BJ (cell line): ENCODE measurements at regions of chr1 and their contacts with region 1.

Region 1: GRCh38 chr1:108828022-108828961 is 28.6 kb downstream of the AKNAD1 start:
- DNase-seq: peak; percentile 83
- H3K4me3 ChIP-seq: peak overlapping the region; percentile 12; the same call in 1 of the 2 replicates
- H3K27me3 ChIP-seq: no peaks in the 10 kb centered on the region
- CTCF ChIP-seq: peak; percentile 68

Region 2: DNA sequence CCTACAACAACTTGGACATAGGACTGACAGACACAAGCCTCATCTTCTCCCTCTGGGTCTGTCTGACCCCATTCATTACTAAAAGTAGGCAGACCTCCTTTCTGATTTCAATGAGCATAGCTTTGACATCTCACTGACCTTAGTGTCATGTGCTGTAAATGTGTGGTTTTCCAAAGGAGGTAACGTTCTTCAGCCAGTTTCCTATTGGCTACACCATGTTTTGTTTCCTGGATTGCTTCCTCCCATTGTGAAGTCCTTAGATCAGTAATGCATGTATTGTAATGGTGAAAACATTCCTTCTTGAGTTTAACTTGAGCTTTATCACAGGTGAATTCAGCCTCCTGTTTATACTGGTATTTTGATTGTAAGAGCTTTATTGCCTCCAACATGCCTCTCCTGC is 61.2 kb before region 1 on chr1:
- CTCF ChIA-PET with region 1: no interaction called
- POLR2A ChIA-PET with region 1: no interaction called
- DNase-seq: no peak
- H3K4me3 ChIP-seq: no peak overlapping the region
- H3K27me3 ChIP-seq: no peaks in the 10 kb centered on the region
- CTCF ChIP-seq: no peak

Region 3: DNA sequence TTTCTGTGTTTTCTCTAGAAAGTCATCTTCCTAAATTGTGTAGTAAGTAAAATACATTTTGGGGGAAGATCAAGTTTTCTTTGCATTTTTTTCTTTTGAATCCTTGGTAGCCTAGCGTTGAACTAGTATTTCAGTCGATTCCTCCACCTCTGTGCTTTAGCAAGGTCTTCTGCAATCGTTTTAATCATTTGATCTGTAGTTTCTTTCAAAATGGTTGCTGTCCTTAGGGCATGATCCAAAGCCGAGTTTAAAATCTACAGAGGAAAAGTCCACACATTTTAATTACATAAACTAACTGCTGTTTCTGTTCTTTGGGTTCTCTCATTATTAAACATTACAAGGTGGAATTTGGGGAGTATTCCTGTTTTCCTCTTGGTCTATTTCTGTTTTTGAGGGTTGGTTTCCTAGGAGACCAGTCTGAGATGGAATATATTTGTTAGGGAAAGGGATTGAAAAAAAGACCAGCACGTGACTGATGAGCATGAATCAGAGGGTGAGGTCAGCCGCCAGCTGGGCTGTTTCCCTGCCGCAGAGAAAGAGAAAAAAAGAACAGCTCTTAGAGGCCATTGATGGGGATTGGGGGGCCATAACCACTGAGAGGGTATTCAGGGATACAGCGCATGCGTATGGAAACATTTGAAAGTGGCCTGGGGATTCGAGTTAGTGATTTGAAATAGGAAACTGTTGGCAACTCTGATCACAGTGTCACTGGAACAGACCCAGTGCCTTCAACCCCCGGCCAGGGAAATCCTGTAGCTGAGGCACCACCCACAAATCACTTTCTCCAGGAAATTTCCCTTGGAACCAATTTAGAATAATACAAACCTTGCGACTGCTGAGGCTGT is 12.0 kb before region 1 on chr1:
- CTCF ChIA-PET with region 1: interaction called, 29 read pairs
- POLR2A ChIA-PET with region 1: interaction called, 6 read pairs
- DNase-seq: peak; percentile 88
- H3K4me3 ChIP-seq: peak overlapping the region; percentile 13; the same call in 1 of the 2 replicates
- H3K27me3 ChIP-seq: no peaks in the 10 kb centered on the region
- CTCF ChIP-seq: no peak

Region 4: GRCh38 chr1:108852221-108852975 is 24.1 kb after region 1 on chr1:
- CTCF ChIA-PET with region 1: interaction called, 17 read pairs
- POLR2A ChIA-PET with region 1: no interaction called
- DNase-seq: no peak
- H3K4me3 ChIP-seq: no peak overlapping the region
- H3K27me3 ChIP-seq: no peaks in the 10 kb centered on the region; the same call in 1 of the 2 replicates
- CTCF ChIP-seq: no peak

Region 5: DNA sequence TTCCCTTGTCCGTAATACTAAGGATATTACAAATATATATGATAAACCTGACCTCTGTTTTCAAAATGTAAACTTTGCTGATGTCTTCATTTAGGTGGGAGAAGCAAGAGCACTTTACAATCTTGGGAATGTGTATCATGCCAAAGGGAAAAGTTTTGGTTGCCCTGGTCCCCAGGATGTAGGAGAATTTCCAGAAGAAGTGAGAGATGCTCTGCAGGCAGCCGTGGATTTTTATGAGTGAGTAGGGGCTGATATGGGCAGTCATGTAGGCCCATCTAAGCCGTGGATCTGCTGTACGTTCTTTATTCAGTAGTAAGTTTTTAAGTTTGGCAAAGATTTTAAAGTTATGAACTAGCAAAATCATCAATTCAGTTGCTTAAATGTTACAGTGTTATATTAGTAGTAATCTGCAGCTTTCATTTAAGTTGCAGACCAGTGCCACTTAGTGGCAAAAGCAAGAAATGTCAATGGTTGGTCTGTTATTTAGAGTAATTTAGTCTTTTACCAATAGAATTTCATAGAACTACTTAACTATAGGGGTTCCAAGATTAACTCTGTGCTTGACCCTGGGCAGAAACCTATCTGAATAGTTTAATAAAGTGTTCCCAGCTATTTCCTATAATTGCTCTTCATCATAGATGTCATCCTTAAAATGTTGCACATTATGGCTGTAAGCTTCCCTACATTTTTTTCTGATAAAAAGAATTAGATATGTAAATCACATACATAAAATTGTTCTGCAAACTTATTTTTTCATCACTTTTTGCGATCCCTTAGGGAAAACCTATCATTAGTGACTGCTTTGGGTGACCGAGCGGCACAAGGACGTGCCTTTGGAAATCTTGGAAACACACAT is 69.8 kb after region 1 on chr1:
- CTCF ChIA-PET with region 1: interaction called, 147 read pairs
- POLR2A ChIA-PET with region 1: interaction called, 5 read pairs
- DNase-seq: no peak
- H3K4me3 ChIP-seq: no peak overlapping the region
- H3K27me3 ChIP-seq: no peaks in the 10 kb centered on the region
- CTCF ChIP-seq: peak; percentile 63

Region 6: DNA sequence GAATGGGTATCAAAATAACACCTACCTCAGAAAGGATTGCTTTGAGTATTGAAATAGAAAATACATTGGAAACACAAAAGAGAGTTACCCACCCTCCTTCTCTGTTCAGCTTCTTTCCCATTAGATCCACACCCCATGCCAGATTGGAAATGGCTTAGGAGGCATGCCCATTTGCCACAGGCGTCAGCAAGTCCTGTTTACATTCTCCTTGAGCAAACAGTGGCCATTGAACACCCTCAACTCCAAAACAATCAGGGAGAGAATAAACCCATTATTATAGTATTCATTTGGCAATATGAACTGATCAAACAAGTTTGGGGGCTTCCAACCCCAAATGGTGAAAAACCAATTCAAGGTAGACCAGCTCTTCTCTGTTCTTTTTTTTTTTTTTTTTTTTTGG is 288.0 kb after region 1 on chr1:
- CTCF ChIA-PET with region 1: no interaction called
- POLR2A ChIA-PET with region 1: no interaction called
- DNase-seq: no peak
- H3K4me3 ChIP-seq: no peak overlapping the region
- H3K27me3 ChIP-seq: peaks cover 20% of the 10 kb centered on the region
- CTCF ChIP-seq: no peak